ENCODE measurements at regions of chr14 and their contacts with region 1.

Region 1: DNA sequence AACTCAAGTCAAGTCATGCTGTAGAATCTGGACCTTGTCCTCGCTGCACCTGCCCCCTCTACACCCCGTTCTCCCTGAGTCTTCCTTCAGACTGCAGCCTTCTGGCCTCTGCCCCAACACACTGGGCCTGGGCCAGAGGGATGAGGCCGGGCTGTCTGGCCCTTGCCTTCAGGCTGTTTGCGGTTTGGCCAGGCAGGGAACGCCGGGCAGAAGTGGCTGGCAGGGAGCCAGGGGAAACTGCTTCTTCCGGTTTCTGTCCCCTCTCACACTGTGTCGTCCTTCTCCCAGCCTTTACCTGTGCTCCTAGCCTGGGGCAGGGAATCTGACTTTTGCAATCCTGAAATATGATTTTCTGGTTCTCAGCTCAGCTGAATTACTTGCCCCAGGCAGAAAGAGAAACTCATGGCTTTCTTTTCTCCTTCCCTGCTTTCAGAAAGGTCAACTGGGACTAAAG is 13.6 kb downstream of the DGLUCY start:
- DNase-seq: no peak
- CTCF ChIP-seq: no peak

Region 2: GRCh38 chr14:91138511-91139359 is 11.3 kb after region 1 on chr14:
- CTCF ChIA-PET with region 1: interaction called, 12 read pairs
- POLR2A ChIA-PET with region 1: no interaction called
- DNase-seq: peak; percentile 36
- CTCF ChIP-seq: peak; percentile 45

Measured in GM10248 (cell line).